WTC11 (cell line): ENCODE measurements at regions of chr1 and their contacts with region 1.

Region 1: GRCh38 chr1:184075055-184076029 is 23.8 kb downstream of the TSEN15 start:
- DNase-seq: no peak
- ATAC-seq: 0 out of 2 replicates have a peak, but pooled peaks have one; percentile 34
- H3K4me3 Mint-ChIP-seq: no peak overlapping the region
- H3K27ac Mint-ChIP-seq: no peak overlapping the region
- H3K4me1 Mint-ChIP-seq: no peaks in the 10 kb centered on the region
- H3K27me3 Mint-ChIP-seq: no peaks in the 10 kb centered on the region
- CTCF ChIP-seq: peak; percentile 27; the same call in 1 of the 2 replicates

Region 2: DNA sequence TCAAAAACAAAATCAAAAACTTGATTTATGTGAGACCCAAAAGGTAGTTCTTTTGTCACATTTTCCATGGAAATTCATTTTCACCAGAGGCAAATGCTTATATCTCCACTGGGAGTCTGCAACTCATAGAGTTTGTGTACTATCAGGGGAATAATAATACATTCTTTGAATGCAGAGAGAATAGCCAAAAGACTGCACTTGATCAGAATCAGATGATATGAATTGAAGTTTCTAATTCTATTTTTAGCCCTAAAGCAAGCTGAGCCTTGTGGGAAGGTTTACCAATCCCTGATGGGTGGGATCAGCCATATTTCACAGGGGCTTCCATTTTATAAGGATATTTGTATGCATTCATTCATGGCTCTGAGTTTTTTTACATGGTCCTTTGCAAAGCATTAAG is 25.8 kb after region 1 on chr1:
- CTCF ChIA-PET with region 1: no interaction called
- POLR2A ChIA-PET with region 1: no interaction called
- DNase-seq: no peak
- ATAC-seq: no peak
- H3K4me3 Mint-ChIP-seq: no peak overlapping the region
- H3K27ac Mint-ChIP-seq: no peak overlapping the region
- H3K4me1 Mint-ChIP-seq: no peaks in the 10 kb centered on the region
- H3K27me3 Mint-ChIP-seq: no peaks in the 10 kb centered on the region; the same call in 1 of the 2 replicates
- CTCF ChIP-seq: no peak

Region 3: DNA sequence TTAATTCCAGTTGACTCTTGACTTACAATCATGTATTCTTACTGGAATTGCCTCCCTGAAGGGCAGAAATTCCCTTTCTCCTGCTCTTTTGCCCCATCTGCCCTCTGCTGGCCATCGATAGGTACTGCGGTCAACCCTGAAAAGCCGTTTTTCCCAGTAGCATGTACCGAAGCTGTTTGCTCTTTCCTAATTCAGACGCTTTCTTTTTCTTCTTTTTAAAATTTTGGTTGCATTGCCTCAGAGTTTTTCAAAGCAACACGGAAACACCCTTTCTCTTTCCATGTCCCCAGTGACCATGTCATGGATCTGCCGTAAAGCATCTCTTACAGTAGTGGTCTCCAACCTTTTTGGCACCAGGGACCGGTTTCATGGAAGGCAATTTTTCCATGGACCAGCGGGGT is 147.3 kb after region 1 on chr1:
- CTCF ChIA-PET with region 1: interaction called, 10 read pairs
- POLR2A ChIA-PET with region 1: no interaction called
- DNase-seq: peak; percentile 71
- ATAC-seq: peak; percentile 55; the same call in 1 of the 2 replicates
- H3K4me3 Mint-ChIP-seq: no peak overlapping the region
- H3K27ac Mint-ChIP-seq: no peak overlapping the region
- H3K4me1 Mint-ChIP-seq: 0 out of 2 replicates have a peak, but pooled peaks cover 3% of the 10 kb centered on the region
- H3K27me3 Mint-ChIP-seq: peaks cover 30% of the 10 kb centered on the region
- CTCF ChIP-seq: peak; percentile 81